PC-3 (cell line): ENCODE measurements at regions of chr9 and their contacts with region 1.

Region 1: DNA sequence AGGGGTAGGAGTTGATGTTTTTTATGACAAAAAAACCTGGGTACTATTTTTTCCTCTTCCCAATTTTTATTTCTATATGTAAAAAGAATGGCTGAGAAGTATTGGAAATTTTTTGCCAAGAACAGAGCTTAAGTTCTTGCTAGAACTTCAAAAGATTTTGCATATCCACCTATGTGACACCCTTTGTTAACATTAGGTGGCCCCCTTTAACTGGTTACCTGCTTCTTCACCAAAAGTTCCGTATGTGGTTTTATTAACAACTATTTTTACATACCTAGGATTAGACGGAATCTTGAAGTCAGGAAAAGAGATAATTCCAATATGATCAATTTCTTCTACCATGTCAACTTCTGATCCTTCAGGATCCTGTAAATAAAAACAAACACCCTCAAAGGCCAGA is 15.5 kb downstream of the C5 start:
- DNase-seq: no peak
- ATAC-seq: no peak
- H3K4me3 ChIP-seq: no peak overlapping the region
- H3K27ac ChIP-seq: no peak overlapping the region
- H3K4me1 ChIP-seq: peaks cover 10% of the 10 kb centered on the region; the same call in 1 of the 2 replicates
- H3K27me3 ChIP-seq: no peaks in the 10 kb centered on the region
- CTCF ChIP-seq: 0 out of 2 replicates have a peak, but pooled peaks have one; percentile 12

Region 2: DNA sequence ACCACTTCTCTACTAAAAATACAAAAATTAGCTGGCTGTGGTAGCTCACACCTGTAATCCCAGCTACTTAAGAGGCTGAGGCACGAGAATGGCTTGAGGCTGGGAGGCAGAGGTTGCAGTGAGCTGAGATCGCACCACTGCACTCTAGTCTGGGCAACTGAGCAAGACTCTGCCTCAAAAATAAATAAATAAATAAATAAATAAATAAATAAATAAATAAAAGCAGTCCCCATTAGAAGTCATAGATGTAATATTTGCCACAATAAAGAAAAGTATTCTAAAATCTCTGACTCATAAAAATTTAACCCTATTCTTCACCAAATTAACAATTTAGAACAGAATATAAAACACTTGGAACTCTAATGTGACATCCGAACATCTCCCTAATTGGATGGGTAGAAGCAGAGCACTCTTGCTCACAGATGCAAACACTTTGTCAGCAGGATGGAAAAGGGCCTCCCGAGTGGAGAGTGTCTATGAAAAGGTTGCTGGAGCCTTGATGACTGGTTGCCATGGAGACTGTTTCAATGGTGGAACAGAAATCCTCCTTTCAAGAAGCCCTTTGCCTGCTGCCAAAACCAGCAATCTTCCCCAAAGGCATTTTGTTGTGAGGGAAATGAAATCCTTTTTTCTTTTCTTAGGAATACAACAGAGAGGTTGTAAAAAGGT is 69.1 kb before region 1 on chr9:
- CTCF ChIA-PET with region 1: no interaction called
- POLR2A ChIA-PET with region 1: no interaction called
- intact Hi-C with region 1: no loop called
- DNase-seq: no peak
- ATAC-seq: no peak
- H3K4me3 ChIP-seq: no peak overlapping the region
- H3K27ac ChIP-seq: no peak overlapping the region
- H3K4me1 ChIP-seq: no peaks in the 10 kb centered on the region
- H3K27me3 ChIP-seq: no peaks in the 10 kb centered on the region
- CTCF ChIP-seq: no peak

Region 3: DNA sequence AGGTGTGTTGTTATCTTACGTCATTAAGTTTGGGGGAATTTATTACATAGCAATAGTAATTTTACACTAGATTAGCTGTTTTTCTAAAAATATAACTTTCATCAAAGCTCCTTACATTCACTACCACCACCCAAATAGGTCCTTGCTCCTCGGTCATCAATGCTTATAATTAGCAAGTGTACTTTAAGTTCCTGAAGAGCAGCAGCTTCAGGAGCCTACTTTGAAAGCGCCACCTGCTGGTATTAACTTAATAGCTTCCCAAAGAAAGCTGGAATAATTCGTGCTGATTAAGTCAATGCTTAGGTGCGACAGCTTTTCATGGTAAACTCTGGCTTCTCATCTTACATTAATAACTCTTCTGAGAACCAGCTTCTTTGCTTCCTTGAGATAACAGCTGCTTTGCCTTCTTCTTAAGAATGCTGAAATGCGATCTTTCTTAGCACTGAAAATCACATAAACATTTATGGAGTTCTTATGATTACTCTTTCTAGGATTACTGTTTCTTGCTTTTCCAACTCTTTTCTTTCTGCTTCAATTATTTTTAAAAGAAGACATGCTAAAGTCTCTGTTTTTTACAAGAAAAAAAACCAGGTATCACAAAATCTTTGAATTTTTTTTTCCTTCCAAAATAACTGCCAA is 25.6 kb after region 1 on chr9:
- CTCF ChIA-PET with region 1: interaction called, 5 read pairs
- POLR2A ChIA-PET with region 1: no interaction called
- intact Hi-C with region 1: loop called (anchors 2 kb)
- DNase-seq: peak; percentile 81
- ATAC-seq: peak; percentile 67
- H3K4me3 ChIP-seq: no peak overlapping the region
- H3K27ac ChIP-seq: no peak overlapping the region
- H3K4me1 ChIP-seq: no peaks in the 10 kb centered on the region
- H3K27me3 ChIP-seq: no peaks in the 10 kb centered on the region
- CTCF ChIP-seq: peak; percentile 78